Panc1 (cell line): ENCODE measurements at regions of chr1 and their contacts with region 1.

Region 1: GRCh38 chr1:207868774-207869721 is 41.9 kb downstream of the CD34 start:
- DNase-seq: no peak
- ATAC-seq: peak; percentile 92
- H3K4me3 ChIP-seq: peak overlapping the region; percentile 60 to 62
- H3K27ac ChIP-seq: peak overlapping the region; percentile 66; the same call in 1 of the 2 replicates
- H3K4me1 ChIP-seq: peaks cover 5% of the 10 kb centered on the region; the same call in 1 of the 2 replicates
- H3K27me3 ChIP-seq: 0 out of 2 replicates have a peak, but pooled peaks cover 2% of the 10 kb centered on the region
- CTCF ChIP-seq: peak; percentile 98

Region 2: DNA sequence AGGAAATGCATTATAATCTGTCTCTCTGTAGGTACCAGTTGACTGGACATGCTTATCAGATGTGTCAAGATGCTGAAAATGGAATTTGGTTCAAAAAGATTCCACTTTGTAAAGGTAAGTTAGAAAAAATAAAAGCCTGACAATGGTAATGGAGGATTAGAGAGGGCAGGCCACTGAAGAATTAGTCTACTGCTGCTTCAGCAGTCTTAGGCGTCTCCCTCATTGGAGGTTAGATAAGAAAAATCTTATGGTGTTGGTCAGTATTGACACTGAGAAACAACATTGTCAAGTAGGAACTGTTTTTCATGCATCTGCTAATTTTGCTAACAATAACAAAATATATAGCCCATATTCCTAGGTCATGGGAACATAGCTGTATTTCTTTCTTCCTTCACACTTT is 394.8 kb before region 1 on chr1:
- CTCF ChIA-PET with region 1: no interaction called
- POLR2A ChIA-PET with region 1: no interaction called
- in situ Hi-C with region 1: no loop called
- intact Hi-C with region 1: no loop called
- DNase-seq: no peak
- ATAC-seq: no peak
- H3K4me3 ChIP-seq: no peak overlapping the region
- H3K27ac ChIP-seq: no peak overlapping the region
- H3K4me1 ChIP-seq: no peaks in the 10 kb centered on the region
- H3K27me3 ChIP-seq: peaks cover 2% of the 10 kb centered on the region
- CTCF ChIP-seq: no peak

Region 3: GRCh38 chr1:207828485-207829158 is 40.4 kb before region 1 on chr1:
- CTCF ChIA-PET with region 1: interaction called, 13 read pairs
- POLR2A ChIA-PET with region 1: no interaction called
- in situ Hi-C with region 1: no loop called
- intact Hi-C with region 1: loop called (anchors 1 kb)
- DNase-seq: peak; percentile 80
- ATAC-seq: peak; percentile 86
- H3K4me3 ChIP-seq: no peak overlapping the region
- H3K27ac ChIP-seq: no peak overlapping the region
- H3K4me1 ChIP-seq: peaks cover 33% of the 10 kb centered on the region
- H3K27me3 ChIP-seq: no peaks in the 10 kb centered on the region
- CTCF ChIP-seq: peak; percentile 91

Region 4: GRCh38 chr1:207944571-207944970 is 75.5 kb after region 1 on chr1:
- CTCF ChIA-PET with region 1: no interaction called
- POLR2A ChIA-PET with region 1: no interaction called
- in situ Hi-C with region 1: no loop called
- intact Hi-C with region 1: no loop called
- DNase-seq: no peak
- ATAC-seq: no peak
- H3K4me3 ChIP-seq: no peak overlapping the region
- H3K27ac ChIP-seq: no peak overlapping the region
- H3K4me1 ChIP-seq: no peaks in the 10 kb centered on the region
- H3K27me3 ChIP-seq: no peaks in the 10 kb centered on the region
- CTCF ChIP-seq: no peak